ENCODE measurements at regions of chr16 and their contacts with region 1.

Region 1: DNA sequence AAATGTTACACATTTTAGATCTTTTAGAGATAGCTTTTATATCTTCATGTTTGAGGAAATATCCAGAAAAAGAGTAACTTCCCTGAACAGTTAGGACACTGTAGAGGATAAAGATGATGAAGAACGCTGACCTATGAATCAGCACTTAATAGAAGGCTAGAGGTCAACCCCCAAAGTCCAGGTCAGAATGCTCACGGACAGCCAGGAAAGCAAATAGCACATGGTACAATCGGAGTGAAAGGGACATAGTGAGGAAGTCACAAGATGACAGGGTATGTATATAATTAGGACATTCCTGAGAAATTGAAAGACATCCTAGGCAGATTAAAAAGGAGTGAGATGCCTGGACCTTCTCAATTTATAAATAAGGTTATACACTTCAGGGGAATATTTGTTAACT is 55.1 kb upstream of the CNTNAP4 start:
- DNase-seq: peak; percentile 41 to 62
- H3K4me3 ChIP-seq: no peak overlapping the region
- H3K4me3 Mint-ChIP-seq: peak overlapping the region; percentile 21
- H3K27ac Mint-ChIP-seq: peak overlapping the region; percentile 26
- H3K4me1 ChIP-seq: peaks cover 24% of the 10 kb centered on the region
- H3K4me1 Mint-ChIP-seq: peaks cover 17% of the 10 kb centered on the region
- H3K27me3 ChIP-seq: no peaks in the 10 kb centered on the region
- H3K27me3 Mint-ChIP-seq: no peaks in the 10 kb centered on the region
- CTCF ChIP-seq: no peak

Region 2: GRCh38 chr16:76194623-76195015 is 27.5 kb before region 1 on chr16:
- CTCF ChIA-PET with region 1: no interaction called
- POLR2A ChIA-PET with region 1: no interaction called
- intact Hi-C with region 1: loop called (anchors 2 kb)
- DNase-seq: no peak
- H3K4me3 ChIP-seq: no peak overlapping the region
- H3K4me3 Mint-ChIP-seq: no peak overlapping the region
- H3K27ac Mint-ChIP-seq: no peak overlapping the region
- H3K4me1 ChIP-seq: peaks cover 15% of the 10 kb centered on the region
- H3K4me1 Mint-ChIP-seq: peaks cover 15% of the 10 kb centered on the region
- H3K27me3 ChIP-seq: no peaks in the 10 kb centered on the region
- H3K27me3 Mint-ChIP-seq: no peaks in the 10 kb centered on the region
- CTCF ChIP-seq: no peak

Region 3: GRCh38 chr16:76265434-76266045 is 43.5 kb after region 1 on chr16:
- CTCF ChIA-PET with region 1: no interaction called
- POLR2A ChIA-PET with region 1: no interaction called
- intact Hi-C with region 1: no loop called
- DNase-seq: peak; percentile 58 to 72
- H3K4me3 ChIP-seq: no peak overlapping the region
- H3K4me3 Mint-ChIP-seq: no peak overlapping the region
- H3K27ac Mint-ChIP-seq: no peak overlapping the region
- H3K4me1 ChIP-seq: no peaks in the 10 kb centered on the region
- H3K4me1 Mint-ChIP-seq: peaks cover 4% of the 10 kb centered on the region
- H3K27me3 ChIP-seq: no peaks in the 10 kb centered on the region
- H3K27me3 Mint-ChIP-seq: no peaks in the 10 kb centered on the region
- CTCF ChIP-seq: peak; percentile 71 to 87